ENCODE measurements at regions of chr7 and their contacts with region 1.

Region 1: DNA sequence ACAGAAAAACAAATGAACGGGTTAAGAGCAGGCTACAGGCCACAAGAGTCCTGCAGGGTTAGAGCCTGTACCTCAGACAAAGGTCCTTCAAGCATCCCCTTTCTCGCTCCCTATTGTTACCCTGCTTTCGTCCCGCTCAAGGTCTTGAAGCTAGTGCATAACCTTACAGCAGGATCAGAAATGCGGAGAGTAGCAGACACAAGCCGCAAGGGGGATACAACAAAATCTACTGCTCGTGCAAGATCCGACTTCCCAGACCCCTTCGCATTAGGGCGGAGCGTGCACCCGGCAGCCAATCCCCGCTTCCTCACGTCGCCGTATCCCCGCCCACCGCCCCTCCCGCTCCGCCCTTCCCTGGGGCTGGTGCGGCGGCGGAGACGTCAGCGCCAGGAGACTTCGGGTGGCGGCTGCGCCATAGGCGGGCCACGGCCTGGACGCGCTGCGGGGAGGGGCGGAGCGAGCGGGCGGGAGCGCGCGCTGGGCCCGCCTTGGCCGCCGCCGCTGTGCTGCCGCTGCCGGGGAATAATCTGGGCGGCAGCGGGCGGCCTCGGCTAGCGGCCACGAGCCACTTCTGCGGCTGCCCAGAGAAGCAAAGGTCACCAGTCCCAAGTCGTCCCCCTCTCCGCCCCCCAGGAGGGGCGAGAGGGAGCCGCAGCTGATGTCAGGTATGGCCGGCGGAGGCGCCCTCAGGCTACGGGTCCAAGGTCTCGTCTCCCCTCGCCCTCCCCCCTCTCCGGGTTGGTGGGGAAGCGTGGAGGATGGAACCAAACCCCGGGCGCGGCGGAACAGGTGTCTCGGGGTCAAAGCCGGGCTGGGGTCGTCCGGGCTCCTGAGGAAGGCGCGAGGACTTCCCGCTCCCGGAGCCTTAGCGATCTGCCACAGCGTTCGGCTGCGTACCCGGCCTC is at the start of gene C1GALT1:
- DNase-seq: peak; percentile 93
- ATAC-seq: peak; percentile 90
- H3K4me3 ChIP-seq: peak within 1 kb of the TSS; percentile 80 to 82
- H3K27ac ChIP-seq: peak within 1 kb of the TSS; percentile 86
- H3K4me1 ChIP-seq: peaks cover 19 to 39% of the 10 kb centered on the region in 2 experiments
- H3K27me3 ChIP-seq: no peaks in the 10 kb centered on the region
- CTCF ChIP-seq: peak in 2 of 3 experiments; percentile 21 to 42; a peak in 2 of 6 replicates
- POLR2A ChIP-seq: peak; percentile 97
- RAD21 ChIP-seq: peak; percentile 44
- total RNA-seq, gene C1GALT1: 27.2 TPM

Region 2: DNA sequence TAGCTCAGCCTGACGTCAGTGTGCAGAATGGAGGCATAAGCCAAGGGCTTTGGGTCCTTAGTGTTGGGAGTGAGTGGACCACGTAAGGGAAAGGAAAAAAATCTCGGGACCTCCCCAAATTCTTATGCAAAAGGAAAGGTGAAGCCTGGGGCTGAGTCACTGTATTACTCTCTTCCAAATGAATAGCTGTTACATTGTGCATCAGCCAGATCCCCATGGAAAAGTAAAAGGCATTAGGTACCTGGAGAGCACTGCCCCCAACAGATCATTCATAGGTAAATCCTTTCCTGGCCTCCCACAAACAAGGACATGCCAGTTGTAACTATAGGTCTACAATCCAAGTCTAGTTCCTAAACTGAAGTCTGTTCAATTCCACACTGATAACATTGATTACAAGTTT is 170.4 kb after region 1 on chr7:
- CTCF ChIA-PET with region 1: no interaction called
- POLR2A ChIA-PET with region 1: no interaction called
- RAD21 ChIA-PET with region 1: no interaction called
- intact Hi-C with region 1: loop called (anchors 5 kb)
- DNase-seq: no peak
- ATAC-seq: peak; percentile 70
- H3K4me3 ChIP-seq: no peak overlapping the region
- H3K27ac ChIP-seq: no peak overlapping the region
- H3K4me1 ChIP-seq: peaks cover 7 to 13% of the 10 kb centered on the region in 2 experiments
- H3K27me3 ChIP-seq: no peaks in the 10 kb centered on the region
- CTCF ChIP-seq: peak in 2 of 3 experiments; percentile 20 to 24; a peak in 2 of 6 replicates
- POLR2A ChIP-seq: no peak
- RAD21 ChIP-seq: peak; percentile 60

Region 3: DNA sequence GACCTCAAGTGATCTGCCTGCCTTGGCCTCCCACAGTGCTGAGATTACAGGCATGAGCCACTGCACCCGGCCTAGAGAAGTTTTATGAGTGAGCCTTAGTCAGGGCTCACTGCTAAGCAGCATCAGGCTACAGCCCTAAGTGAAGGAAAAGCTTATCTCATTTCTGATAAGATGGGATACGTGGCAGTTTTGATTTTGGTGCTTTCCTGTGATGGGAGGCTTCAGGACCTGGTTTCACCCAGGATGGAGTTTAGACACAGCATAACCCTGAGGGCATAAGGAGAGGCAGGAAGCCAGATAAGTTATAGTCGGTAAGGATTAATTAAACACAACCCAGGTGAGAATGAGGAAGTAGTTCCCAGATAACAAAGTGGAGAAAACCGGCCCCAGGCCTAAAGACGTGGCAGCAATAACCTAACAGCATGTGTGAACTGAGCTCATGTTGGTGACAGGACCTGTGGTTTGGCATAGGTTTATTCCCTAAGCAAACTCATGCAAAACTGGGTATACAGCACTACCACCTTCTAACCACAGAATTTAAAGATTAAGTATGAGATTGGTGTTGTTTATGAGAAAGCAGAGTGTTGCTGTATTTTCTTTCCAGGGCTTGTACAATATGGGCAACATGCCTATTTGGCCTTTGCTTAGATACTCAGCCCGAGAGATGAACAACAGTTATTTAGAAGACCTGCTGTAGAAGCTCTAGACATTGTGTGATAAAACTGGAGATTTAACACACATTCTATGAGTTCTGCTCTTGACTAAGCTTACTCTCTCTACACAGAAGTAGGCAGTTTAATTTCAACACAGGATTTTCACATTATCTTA is 233.8 kb after region 1 on chr7:
- CTCF ChIA-PET with region 1: no interaction called
- POLR2A ChIA-PET with region 1: no interaction called
- RAD21 ChIA-PET with region 1: no interaction called
- intact Hi-C with region 1: no loop called
- DNase-seq: no peak
- ATAC-seq: no peak; the same call in 1 of the 2 replicates
- H3K4me3 ChIP-seq: no peak overlapping the region
- H3K27ac ChIP-seq: no peak overlapping the region
- H3K4me1 ChIP-seq: peaks cover 0 to 5% of the 10 kb centered on the region in 2 experiments; a peak in 1 of 4 replicates
- H3K27me3 ChIP-seq: no peaks in the 10 kb centered on the region
- CTCF ChIP-seq: no peak
- POLR2A ChIP-seq: no peak
- RAD21 ChIP-seq: no peak

Measured in HCT116 (cell line).